Naive thymus-derived CD4-positive, alpha-beta T cell (primary cell): ENCODE measurements at regions of chr14 and their contacts with region 1.

Region 1: DNA sequence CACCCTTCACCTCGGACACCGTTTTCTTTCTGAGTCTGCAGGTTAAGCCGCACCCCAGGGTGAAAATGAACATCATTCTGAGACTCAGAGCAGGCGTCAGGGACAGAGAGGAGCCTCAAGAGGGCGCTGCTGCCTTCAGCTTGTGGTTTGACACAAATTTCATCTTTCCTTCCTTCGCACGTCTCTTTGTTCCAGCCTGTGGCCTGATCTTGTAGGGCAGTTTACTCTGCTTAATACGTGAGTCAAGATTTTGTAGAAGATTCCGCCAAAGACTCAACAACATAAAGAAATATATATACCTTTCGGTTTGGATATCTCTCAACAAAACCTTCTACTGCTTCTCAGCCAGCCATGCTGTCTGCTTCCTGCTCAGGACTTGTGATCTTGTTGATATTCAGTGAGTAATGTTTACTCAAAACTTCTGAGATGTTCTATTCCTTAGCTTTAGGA is 329.3 kb upstream of the OR4E1 start:
- DNase-seq: peak; percentile 27 to 71 (median 66)
- ATAC-seq: peak; percentile 89
- H3K4me3 ChIP-seq: peak overlapping the region; percentile 65
- H3K4me3 Mint-ChIP-seq: peak overlapping the region; percentile 78 to 88 (median 84)
- H3K27ac ChIP-seq: peak overlapping the region; percentile 62
- H3K27ac Mint-ChIP-seq: peak overlapping the region; percentile 90 to 96 (median 94)
- H3K4me1 ChIP-seq: peaks cover 6 to 14% of the 10 kb centered on the region in 2 donors
- H3K4me1 Mint-ChIP-seq: peaks cover 3 to 31% (median 29%) of the 10 kb centered on the region in 7 donors
- H3K27me3 ChIP-seq: no peaks in the 10 kb centered on the region
- H3K27me3 Mint-ChIP-seq: no peaks in the 10 kb centered on the region

Region 2: GRCh38 chr14:22039938-22040775 is 37.3 kb after region 1 on chr14:
- CTCF ChIA-PET with region 1: interaction called, 11 read pairs
- POLR2A ChIA-PET with region 1: interaction called, 3 read pairs
- intact Hi-C with region 1: loop called (anchors 1 to 2 kb)
- DNase-seq: peak in 7 of 9 donors; percentile 46 to 70 (median 59)
- ATAC-seq: peak; percentile 93
- H3K4me3 ChIP-seq: peak overlapping the region; percentile 40
- H3K4me3 Mint-ChIP-seq: peak overlapping the region; percentile 79 to 91 (median 83)
- H3K27ac ChIP-seq: peak overlapping the region; percentile 64
- H3K27ac Mint-ChIP-seq: peak overlapping the region; percentile 80 to 92 (median 88)
- H3K4me1 ChIP-seq: no peaks in the 10 kb centered on the region
- H3K4me1 Mint-ChIP-seq: peaks cover 2 to 34% (median 12%) of the 10 kb centered on the region in 7 donors
- H3K27me3 ChIP-seq: no peaks in the 10 kb centered on the region
- H3K27me3 Mint-ChIP-seq: peaks cover 0 to 8% (median 0%) of the 10 kb centered on the region in 5 donors

Region 3: DNA sequence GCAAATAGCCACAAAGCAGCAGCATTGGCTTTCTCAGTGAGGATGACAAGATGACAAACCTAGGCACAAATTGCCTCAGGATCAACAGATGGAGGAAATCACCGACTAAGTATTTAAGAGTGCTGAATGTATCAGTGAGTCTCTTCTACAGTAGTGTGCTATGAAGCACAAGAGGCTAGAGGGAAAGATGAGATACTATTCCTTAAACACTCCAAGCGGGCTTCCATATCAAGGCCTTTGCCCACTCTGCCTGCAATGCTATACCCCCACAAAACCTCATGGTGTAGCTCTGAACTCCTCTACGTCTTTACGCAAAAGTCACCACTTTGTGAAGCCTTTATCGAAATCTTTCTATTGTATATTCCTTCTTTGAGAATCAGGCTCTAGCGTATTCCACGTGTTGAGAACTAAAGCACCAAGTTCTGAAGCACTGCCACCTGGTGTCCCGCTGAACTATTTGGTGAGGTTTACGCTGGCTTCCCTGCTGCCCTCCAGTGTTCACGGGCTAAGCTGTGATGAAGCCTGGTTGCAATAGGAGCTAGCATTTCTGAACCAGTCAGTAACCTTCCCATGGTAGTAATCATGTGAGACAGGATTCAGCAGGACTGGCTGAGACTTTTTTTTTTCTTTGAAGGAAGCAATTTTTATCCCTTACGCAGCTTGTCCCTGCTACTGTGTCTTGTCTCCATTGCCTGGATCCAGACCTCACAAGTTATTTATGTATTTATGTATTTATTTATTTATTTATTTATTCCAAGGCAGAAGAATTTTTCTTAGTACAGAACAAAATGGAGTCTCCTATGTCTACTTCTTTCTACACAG is 97.3 kb after region 1 on chr14:
- CTCF ChIA-PET with region 1: interaction called, 9 read pairs
- POLR2A ChIA-PET with region 1: no interaction called
- intact Hi-C with region 1: loop called (anchors 2 to 5 kb)
- DNase-seq: peak in 8 of 9 donors; percentile 31 to 74 (median 56)
- ATAC-seq: peak; percentile 83
- H3K4me3 ChIP-seq: no peak overlapping the region
- H3K4me3 Mint-ChIP-seq: peak overlapping the region in 3 of 10 donors; percentile 47 to 53 (median 48)
- H3K27ac ChIP-seq: no peak overlapping the region
- H3K27ac Mint-ChIP-seq: peak overlapping the region in 2 of 9 donors; percentile 25 to 49
- H3K4me1 ChIP-seq: peaks cover 3 to 29% of the 10 kb centered on the region in 2 donors
- H3K4me1 Mint-ChIP-seq: peaks cover 1 to 62% (median 48%) of the 10 kb centered on the region in 7 donors
- H3K27me3 ChIP-seq: no peaks in the 10 kb centered on the region
- H3K27me3 Mint-ChIP-seq: no peaks in the 10 kb centered on the region